CD4-positive, alpha-beta T cell (primary cell): ENCODE measurements at regions of chr9 and their contacts with region 1.

Region 1: GRCh38 chr9:133030317-133031129 is at the start of gene GTF3C5:
- DNase-seq: peak; percentile 83 to 98 (median 89)
- ATAC-seq: peak; percentile 96
- H3K4me3 ChIP-seq: peak within 1 kb of the TSS; percentile 93
- H3K4me3 Mint-ChIP-seq: peak within 1 kb of the TSS; percentile 99
- H3K27ac ChIP-seq: peak within 1 kb of the TSS; percentile 83 to 93
- H3K27ac Mint-ChIP-seq: peak within 1 kb of the TSS; percentile 89
- H3K4me1 ChIP-seq: peaks cover 31% of the 10 kb centered on the region
- H3K4me1 Mint-ChIP-seq: peaks cover 49% of the 10 kb centered on the region
- H3K27me3 ChIP-seq: no peaks in the 10 kb centered on the region
- H3K27me3 Mint-ChIP-seq: no peaks in the 10 kb centered on the region
- CTCF ChIP-seq: no peak
- total RNA-seq, gene GTF3C5: 49.0 to 52.4 TPM

Region 2: DNA sequence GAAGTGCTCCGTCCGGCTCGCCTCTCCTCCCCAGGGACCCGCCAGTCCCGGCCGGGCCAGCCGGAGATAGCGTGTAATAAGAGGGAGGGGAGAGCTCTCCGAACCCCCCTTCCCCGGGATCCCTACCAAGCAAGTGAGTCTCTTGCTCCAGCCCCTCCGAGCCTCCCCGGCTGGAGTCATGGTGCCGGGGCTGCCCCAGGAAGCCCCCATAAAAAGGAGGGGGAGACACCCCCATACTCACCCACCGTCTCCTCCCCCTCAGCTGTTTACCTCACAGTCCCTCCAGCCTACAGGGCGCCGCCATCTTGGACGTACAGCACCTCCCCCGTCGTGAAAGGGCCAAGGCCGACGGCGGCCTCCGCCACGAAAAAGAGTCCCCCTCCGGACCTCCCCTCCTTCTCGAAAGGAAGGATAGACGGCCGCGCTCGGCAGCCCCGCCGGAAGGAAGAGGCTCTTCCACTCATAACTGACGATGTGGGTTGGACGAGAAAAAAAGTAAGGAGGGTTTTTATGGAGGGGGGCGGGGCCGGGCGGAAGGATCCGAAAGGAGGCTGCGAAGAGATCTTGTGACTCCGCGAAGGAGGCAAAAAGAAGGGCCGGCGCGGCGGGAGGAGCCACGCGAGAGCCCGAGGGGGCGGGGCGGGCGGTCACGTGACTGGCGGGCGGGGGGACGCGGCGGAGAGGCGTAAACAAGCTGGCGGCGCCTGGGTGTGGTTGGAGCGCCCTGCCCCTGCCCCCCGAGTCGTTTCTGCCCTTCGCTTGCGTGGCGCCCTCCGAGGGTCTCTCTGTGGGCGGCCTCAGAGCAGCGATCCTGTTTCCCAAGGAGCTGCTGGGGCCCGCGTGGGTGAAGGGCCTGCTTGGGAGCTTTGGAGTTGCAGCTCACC is 86.0 kb before region 1 on chr9 and contains the start of gene TSC1:
- CTCF ChIA-PET with region 1: no interaction called
- POLR2A ChIA-PET with region 1: interaction called, 31 read pairs
- intact Hi-C with region 1: loop called in 1 of 2 experiments (anchors 1 kb)
- DNase-seq: peak; percentile 96 to 99 (median 98)
- ATAC-seq: peak; percentile 87
- H3K4me3 ChIP-seq: peak within 1 kb of the TSS; percentile 96
- H3K4me3 Mint-ChIP-seq: peak within 1 kb of the TSS; percentile 91
- H3K27ac ChIP-seq: peak within 1 kb of the TSS; percentile 98 to 99
- H3K27ac Mint-ChIP-seq: peak within 1 kb of the TSS; percentile 97
- H3K4me1 ChIP-seq: peaks cover 24% of the 10 kb centered on the region
- H3K4me1 Mint-ChIP-seq: peaks cover 23% of the 10 kb centered on the region
- H3K27me3 ChIP-seq: no peaks in the 10 kb centered on the region
- H3K27me3 Mint-ChIP-seq: no peaks in the 10 kb centered on the region
- CTCF ChIP-seq: no peak
- total RNA-seq, gene TSC1: 50.0 to 51.9 TPM

Region 3: GRCh38 chr9:133090752-133091385 is 60.3 kb after region 1 on chr9:
- CTCF ChIA-PET with region 1: no interaction called
- POLR2A ChIA-PET with region 1: no interaction called
- intact Hi-C with region 1: no loop called
- DNase-seq: no peak
- ATAC-seq: no peak
- H3K4me3 ChIP-seq: no peak overlapping the region
- H3K4me3 Mint-ChIP-seq: no peak overlapping the region
- H3K27ac ChIP-seq: no peak overlapping the region
- H3K27ac Mint-ChIP-seq: no peak overlapping the region
- H3K4me1 ChIP-seq: no peaks in the 10 kb centered on the region
- H3K4me1 Mint-ChIP-seq: no peaks in the 10 kb centered on the region
- H3K27me3 ChIP-seq: no peaks in the 10 kb centered on the region
- H3K27me3 Mint-ChIP-seq: no peaks in the 10 kb centered on the region
- CTCF ChIP-seq: no peak

Region 4: DNA sequence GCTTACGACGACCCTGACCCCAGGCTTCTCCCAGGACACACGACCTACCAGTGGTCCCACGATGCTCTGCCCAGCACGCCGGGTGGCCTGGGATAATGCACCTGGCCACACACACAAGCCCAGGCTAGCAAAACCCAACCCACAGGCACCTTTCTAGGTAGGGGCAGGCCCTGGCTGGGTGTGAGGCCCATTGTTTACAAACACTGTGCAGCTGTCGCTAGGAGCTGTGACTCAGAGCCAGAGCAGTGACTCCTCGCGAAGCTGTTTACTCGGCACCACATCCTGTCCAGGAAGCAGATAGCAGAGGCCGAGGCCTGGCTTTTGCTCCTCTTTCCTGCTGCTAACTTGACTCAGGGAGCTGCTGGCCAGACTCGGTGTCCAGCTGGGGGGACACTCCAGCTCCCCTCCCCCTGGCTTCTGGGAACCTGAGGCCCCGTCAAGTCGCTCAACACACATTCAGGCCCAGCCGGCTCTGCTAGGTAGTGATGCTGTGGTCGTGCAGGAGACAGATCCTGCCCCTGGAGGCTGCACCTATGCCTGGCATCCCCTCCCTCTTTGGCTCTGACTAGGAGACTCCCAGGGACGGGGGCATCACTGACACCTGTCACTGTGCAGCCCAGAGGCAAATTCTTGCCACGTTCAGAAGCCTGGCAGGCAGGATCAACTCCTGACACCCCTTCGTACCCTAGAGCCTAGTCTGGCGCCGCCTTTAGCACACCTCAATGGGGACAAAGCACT is 103.3 kb after region 1 on chr9:
- CTCF ChIA-PET with region 1: no interaction called
- POLR2A ChIA-PET with region 1: interaction called, 21 read pairs
- intact Hi-C with region 1: no loop called
- DNase-seq: peak; percentile 83 to 98 (median 88)
- ATAC-seq: peak; percentile 80
- H3K4me3 ChIP-seq: peak overlapping the region; percentile 20
- H3K4me3 Mint-ChIP-seq: peak overlapping the region; percentile 87
- H3K27ac ChIP-seq: peak overlapping the region; percentile 98
- H3K27ac Mint-ChIP-seq: peak overlapping the region; percentile 99
- H3K4me1 ChIP-seq: peaks cover 100% of the 10 kb centered on the region
- H3K4me1 Mint-ChIP-seq: peaks cover 70% of the 10 kb centered on the region
- H3K27me3 ChIP-seq: no peaks in the 10 kb centered on the region
- H3K27me3 Mint-ChIP-seq: no peaks in the 10 kb centered on the region
- CTCF ChIP-seq: peak; percentile 9

Region 5: DNA sequence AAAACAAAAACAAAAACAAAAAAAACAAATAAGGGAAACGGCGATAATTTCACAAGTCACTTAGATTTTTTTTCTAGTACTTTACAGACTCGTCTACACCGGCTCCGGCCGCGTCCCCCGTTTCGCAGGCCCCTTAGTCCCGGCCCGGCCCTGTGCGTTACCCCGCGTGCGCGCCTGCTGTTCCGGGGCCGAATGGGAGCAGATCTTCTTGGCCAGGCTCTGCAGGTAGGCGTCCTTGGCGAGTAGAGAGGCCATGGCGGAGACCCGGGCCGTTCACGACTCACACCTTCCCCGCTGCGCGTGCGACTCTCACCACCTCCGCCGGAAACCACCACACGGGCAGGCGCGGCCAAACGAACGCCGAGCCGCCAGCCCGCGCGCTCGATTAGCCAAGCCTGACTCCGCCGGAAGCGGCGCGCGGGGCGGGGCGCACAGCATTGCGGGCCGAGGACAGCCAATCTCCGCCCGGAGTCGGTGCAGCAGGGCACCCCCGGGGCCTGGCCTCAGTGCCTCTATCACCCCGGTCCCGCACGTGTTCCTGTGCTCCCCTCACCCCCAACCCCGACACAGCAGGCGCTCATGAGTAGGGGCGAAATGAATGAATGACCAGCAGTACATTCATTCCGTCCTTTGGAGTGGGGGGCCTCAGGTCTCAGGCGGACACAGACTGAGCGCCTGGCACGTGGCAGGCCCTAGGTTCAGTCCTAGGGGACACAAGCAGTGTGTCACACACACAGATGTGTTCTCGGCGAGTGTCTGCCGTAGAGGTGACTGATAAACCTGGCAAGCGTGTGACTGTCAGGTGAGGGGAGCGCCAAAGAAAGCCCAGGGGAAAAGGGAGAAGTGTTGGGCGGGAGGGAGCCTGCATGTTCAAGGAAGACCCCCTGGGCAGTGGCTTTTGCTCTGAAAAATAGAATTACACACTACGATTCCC is 305.6 kb after region 1 on chr9 and contains the start of gene SURF6:
- CTCF ChIA-PET with region 1: no interaction called
- POLR2A ChIA-PET with region 1: no interaction called
- intact Hi-C with region 1: loop called in 1 of 2 experiments (anchors 5 kb)
- DNase-seq: peak; percentile 85 to 97 (median 91)
- ATAC-seq: peak; percentile 93
- H3K4me3 ChIP-seq: peak within 1 kb of the TSS; percentile 86
- H3K4me3 Mint-ChIP-seq: peak within 1 kb of the TSS; percentile 97
- H3K27ac ChIP-seq: peak within 1 kb of the TSS; percentile 64 to 77
- H3K27ac Mint-ChIP-seq: peak within 1 kb of the TSS; percentile 91
- H3K4me1 ChIP-seq: peaks cover 54% of the 10 kb centered on the region
- H3K4me1 Mint-ChIP-seq: peaks cover 32% of the 10 kb centered on the region
- H3K27me3 ChIP-seq: no peaks in the 10 kb centered on the region
- H3K27me3 Mint-ChIP-seq: no peaks in the 10 kb centered on the region
- CTCF ChIP-seq: no peak
- total RNA-seq, gene SURF6: 15.1 to 15.9 TPM

Region 6: DNA sequence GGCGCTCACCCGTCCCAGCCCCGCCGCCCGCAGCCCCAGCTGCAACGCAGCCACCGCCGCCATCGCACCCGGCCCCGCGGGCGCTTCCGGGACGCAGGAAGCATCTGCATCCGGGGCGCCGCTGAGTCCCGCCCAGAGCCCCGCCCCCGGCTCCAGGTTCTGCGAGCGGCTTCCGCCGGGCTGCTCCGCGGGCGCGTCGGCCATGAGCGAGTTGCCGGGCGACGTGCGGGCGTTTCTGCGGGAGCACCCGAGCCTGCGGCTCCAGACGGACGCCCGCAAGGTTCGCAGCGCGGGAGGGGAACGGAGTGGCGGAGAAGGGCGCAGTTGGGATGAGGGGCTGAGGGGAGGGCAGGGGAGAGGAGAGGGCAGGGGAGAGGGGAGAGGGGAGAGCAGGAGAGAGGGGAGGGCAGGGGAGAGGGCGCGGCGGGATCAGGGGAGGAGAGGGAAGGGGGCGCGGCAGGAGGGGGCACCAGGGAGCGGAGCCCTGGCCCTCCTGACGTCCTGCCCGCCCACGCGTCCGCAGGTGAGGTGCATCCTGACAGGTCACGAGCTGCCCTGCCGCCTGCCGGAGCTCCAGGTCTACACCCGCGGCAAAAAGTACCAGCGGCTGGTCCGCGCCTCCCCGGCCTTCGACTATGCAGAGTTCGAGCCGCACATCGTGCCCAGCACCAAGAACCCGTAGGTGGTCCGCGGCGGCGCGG is 326.0 kb after region 1 on chr9 and contains the starts of genes SURF1 and SURF2:
- CTCF ChIA-PET with region 1: no interaction called
- POLR2A ChIA-PET with region 1: interaction called, 12 read pairs
- intact Hi-C with region 1: no loop called
- DNase-seq: peak; percentile 81 to 94 (median 90)
- ATAC-seq: peak; percentile 95
- H3K4me3 ChIP-seq: peak within 1 kb of the TSS; percentile 74
- H3K4me3 Mint-ChIP-seq: peak within 1 kb of the TSS; percentile 92
- H3K27ac ChIP-seq: peak within 1 kb of the TSS; percentile 56 to 79
- H3K27ac Mint-ChIP-seq: peak within 1 kb of the TSS; percentile 88
- H3K4me1 ChIP-seq: peaks cover 50% of the 10 kb centered on the region
- H3K4me1 Mint-ChIP-seq: peaks cover 27% of the 10 kb centered on the region
- H3K27me3 ChIP-seq: no peaks in the 10 kb centered on the region
- H3K27me3 Mint-ChIP-seq: no peaks in the 10 kb centered on the region
- CTCF ChIP-seq: no peak
- total RNA-seq, gene SURF1: 42.5 to 45.9 TPM
- total RNA-seq, gene SURF2: 12.7 TPM

Region 7: DNA sequence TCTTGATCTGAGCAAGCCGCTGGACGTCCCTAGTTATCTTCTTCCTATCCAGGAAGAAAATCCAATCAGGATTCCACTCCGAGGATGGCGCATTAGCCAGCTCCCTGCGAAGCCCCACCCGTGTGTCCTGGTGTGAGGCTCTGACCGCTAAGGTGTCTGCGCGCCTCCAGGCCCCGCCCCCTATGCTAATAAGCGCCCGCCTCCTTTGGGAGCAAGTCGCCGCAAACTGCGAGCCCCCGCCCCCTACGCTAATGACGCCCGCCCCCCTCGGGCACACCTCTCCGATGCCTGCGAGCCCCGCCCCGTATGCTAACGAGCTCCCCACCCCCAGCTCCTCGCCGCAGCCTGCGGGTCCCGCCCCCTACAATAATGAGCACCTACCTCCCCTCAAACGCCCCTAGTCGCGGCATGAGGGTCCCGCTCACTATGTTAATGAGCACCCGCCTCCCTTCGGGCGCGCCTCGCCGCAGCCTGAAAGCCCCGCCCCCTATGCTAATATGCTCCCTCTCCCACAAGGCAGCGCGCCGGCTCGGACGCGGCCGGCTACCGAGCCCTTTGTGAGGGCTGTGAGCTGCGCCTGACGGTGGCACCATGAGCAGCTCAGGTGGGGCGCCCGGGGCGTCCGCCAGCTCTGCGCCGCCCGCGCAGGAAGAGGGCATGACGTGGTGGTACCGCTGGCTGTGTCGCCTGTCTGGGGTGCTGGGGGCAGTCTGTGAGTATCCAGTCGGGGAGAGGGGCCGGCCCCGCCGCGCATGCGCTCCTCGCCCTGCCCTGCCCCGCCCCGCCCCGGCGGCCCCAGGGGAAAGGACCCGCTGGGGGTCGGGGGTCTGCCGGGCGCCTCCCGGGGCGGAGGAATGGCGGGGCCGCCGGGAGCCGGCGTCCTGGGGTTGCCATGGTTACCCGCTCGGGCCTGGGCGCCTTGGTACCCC is 429.2 kb after region 1 on chr9 and contains the start of gene CACFD1:
- CTCF ChIA-PET with region 1: no interaction called
- POLR2A ChIA-PET with region 1: interaction called, 11 read pairs
- intact Hi-C with region 1: no loop called
- DNase-seq: peak; percentile 83 to 97 (median 90)
- ATAC-seq: peak; percentile 80
- H3K4me3 ChIP-seq: peak within 1 kb of the TSS; percentile 69
- H3K4me3 Mint-ChIP-seq: peak within 1 kb of the TSS; percentile 95
- H3K27ac ChIP-seq: peak within 1 kb of the TSS; percentile 52 to 82
- H3K27ac Mint-ChIP-seq: peak within 1 kb of the TSS; percentile 97
- H3K4me1 ChIP-seq: peaks cover 18% of the 10 kb centered on the region
- H3K4me1 Mint-ChIP-seq: peaks cover 23% of the 10 kb centered on the region
- H3K27me3 ChIP-seq: no peaks in the 10 kb centered on the region
- H3K27me3 Mint-ChIP-seq: no peaks in the 10 kb centered on the region
- CTCF ChIP-seq: no peak
- total RNA-seq, gene CACFD1: 3.7 to 3.8 TPM

Region 8: DNA sequence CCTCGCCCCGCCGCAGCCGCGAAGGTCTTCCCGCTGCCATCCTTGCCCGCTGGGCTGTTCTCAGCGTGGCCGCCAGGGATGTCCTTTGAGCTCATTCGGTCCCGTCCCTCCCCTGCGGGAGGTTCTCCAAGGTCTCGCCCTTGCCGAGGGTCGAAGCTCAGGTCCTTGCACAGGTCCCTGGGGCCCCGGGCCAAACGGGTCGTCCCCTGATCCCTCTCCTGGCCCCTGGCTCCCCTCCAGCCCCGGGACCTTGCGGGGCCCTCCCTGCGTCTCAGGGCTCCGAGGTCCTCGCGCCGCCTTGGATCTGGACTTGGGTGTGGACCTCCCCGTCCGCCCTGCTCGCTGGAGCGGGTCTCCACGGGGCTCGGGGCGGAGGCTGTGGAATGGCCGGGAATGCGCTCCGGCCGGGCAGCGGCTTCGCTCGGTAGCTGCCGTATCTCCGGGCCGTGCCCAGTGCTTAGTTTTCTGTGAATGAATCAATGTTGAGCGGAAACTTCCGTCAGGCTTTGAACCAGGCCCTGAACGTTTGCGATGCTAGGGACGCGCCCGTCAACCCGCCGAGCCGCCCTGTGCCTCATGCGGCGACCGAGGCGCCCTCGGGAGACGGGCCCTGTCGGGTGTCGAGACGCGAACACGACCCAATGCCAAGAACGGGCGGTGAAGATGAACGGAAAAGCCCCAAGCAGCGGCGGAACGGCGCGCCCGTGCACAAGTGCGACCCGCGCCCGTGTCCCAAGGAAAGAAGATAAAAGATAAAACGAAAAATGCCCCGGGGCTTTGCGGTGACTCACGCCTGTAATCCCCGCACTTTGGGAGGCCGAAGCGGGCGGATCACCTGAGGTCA is 1133.1 kb after region 1 on chr9:
- CTCF ChIA-PET with region 1: no interaction called
- POLR2A ChIA-PET with region 1: interaction called, 10 read pairs
- intact Hi-C with region 1: no loop called
- DNase-seq: peak; percentile 47 to 90 (median 66)
- ATAC-seq: peak; percentile 33
- H3K4me3 ChIP-seq: no peak overlapping the region
- H3K4me3 Mint-ChIP-seq: no peak overlapping the region
- H3K27ac ChIP-seq: no peak overlapping the region
- H3K27ac Mint-ChIP-seq: no peak overlapping the region
- H3K4me1 ChIP-seq: peaks cover 17% of the 10 kb centered on the region
- H3K4me1 Mint-ChIP-seq: peaks cover 17% of the 10 kb centered on the region
- H3K27me3 ChIP-seq: no peaks in the 10 kb centered on the region
- H3K27me3 Mint-ChIP-seq: peaks cover 4% of the 10 kb centered on the region
- CTCF ChIP-seq: peak; percentile 59